Tibial artery (tissue), 4 donors: ENCODE measurements at regions of chr2 and their contacts with region 1.

Region 1: GRCh38 chr2:16756831-16757644 is 91.4 kb upstream of the CYRIA start:
- DNase-seq: peak; percentile 57 to 77
- H3K4me3 ChIP-seq: no peak overlapping the region
- H3K27ac ChIP-seq: no peak overlapping the region
- H3K4me1 ChIP-seq: no peaks in the 10 kb centered on the region
- H3K27me3 ChIP-seq: peaks cover 0 to 3% of the 10 kb centered on the region in 2 donors
- CTCF ChIP-seq: peak; percentile 84 to 88

Region 2: GRCh38 chr2:16608661-16609643 is 148.1 kb before region 1 on chr2:
- intact Hi-C with region 1: loop called (anchors 5 kb)
- DNase-seq: peak; percentile 80 to 87
- H3K4me3 ChIP-seq: peak overlapping the region; percentile 37 to 48
- H3K27ac ChIP-seq: no peak overlapping the region
- H3K4me1 ChIP-seq: peaks cover 0 to 9% (median 3%) of the 10 kb centered on the region in 4 donors
- H3K27me3 ChIP-seq: peaks cover 0 to under 1% of the 10 kb centered on the region in 2 donors
- CTCF ChIP-seq: peak; percentile 89 to 97

Region 3: GRCh38 chr2:16851126-16851525 is 94.1 kb after region 1 on chr2:
- intact Hi-C with region 1: no loop called
- DNase-seq: no peak
- H3K4me3 ChIP-seq: no peak overlapping the region
- H3K27ac ChIP-seq: no peak overlapping the region
- H3K4me1 ChIP-seq: no peaks in the 10 kb centered on the region
- H3K27me3 ChIP-seq: no peaks in the 10 kb centered on the region
- CTCF ChIP-seq: no peak